CD8-positive, alpha-beta T cell (primary cell): ENCODE measurements at regions of chr12 and their contacts with region 1.

Region 1: GRCh38 chr12:54579696-54580333 is 8.6 kb downstream of the PPP1R1A start:
- DNase-seq: peak; percentile 66 to 87 (median 80)
- ATAC-seq: peak; percentile 98
- H3K4me3 ChIP-seq: no peak overlapping the region
- H3K4me3 Mint-ChIP-seq: no peak overlapping the region
- H3K27ac ChIP-seq: no peak overlapping the region
- H3K27ac Mint-ChIP-seq: no peak overlapping the region
- H3K4me1 ChIP-seq: peaks cover 6% of the 10 kb centered on the region
- H3K4me1 Mint-ChIP-seq: peaks cover 5% of the 10 kb centered on the region
- H3K27me3 ChIP-seq: no peaks in the 10 kb centered on the region
- H3K27me3 Mint-ChIP-seq: peaks cover 9% of the 10 kb centered on the region
- CTCF ChIP-seq: peak; percentile 97

Region 2: GRCh38 chr12:53862831-53863230 is 717.0 kb before region 1 on chr12:
- CTCF ChIA-PET with region 1: no interaction called
- POLR2A ChIA-PET with region 1: no interaction called
- intact Hi-C with region 1: no loop called
- DNase-seq: no peak
- ATAC-seq: no peak
- H3K4me3 ChIP-seq: no peak overlapping the region
- H3K4me3 Mint-ChIP-seq: no peak overlapping the region
- H3K27ac ChIP-seq: no peak overlapping the region
- H3K27ac Mint-ChIP-seq: no peak overlapping the region
- H3K4me1 ChIP-seq: no peaks in the 10 kb centered on the region
- H3K4me1 Mint-ChIP-seq: no peaks in the 10 kb centered on the region
- H3K27me3 ChIP-seq: peaks cover 3 to 7% of the 10 kb centered on the region in 2 experiments
- H3K27me3 Mint-ChIP-seq: peaks cover 18% of the 10 kb centered on the region
- CTCF ChIP-seq: no peak

Region 3: GRCh38 chr12:54560374-54560858 is 19.4 kb before region 1 on chr12:
- CTCF ChIA-PET with region 1: interaction called, 55 read pairs
- POLR2A ChIA-PET with region 1: no interaction called
- intact Hi-C with region 1: no loop called
- DNase-seq: peak; percentile 62 to 92 (median 83)
- ATAC-seq: peak; percentile 100
- H3K4me3 ChIP-seq: peak overlapping the region; percentile 53 to 58
- H3K4me3 Mint-ChIP-seq: peak overlapping the region; percentile 86
- H3K27ac ChIP-seq: peak overlapping the region; percentile 36 to 62
- H3K27ac Mint-ChIP-seq: peak overlapping the region; percentile 89
- H3K4me1 ChIP-seq: peaks cover 19% of the 10 kb centered on the region
- H3K4me1 Mint-ChIP-seq: peaks cover 18% of the 10 kb centered on the region
- H3K27me3 ChIP-seq: no peaks in the 10 kb centered on the region
- H3K27me3 Mint-ChIP-seq: no peaks in the 10 kb centered on the region
- CTCF ChIP-seq: no peak

Region 4: GRCh38 chr12:54641554-54641953 is 61.7 kb after region 1 on chr12:
- CTCF ChIA-PET with region 1: no interaction called
- POLR2A ChIA-PET with region 1: no interaction called
- intact Hi-C with region 1: no loop called
- DNase-seq: no peak
- ATAC-seq: no peak
- H3K4me3 ChIP-seq: no peak overlapping the region
- H3K4me3 Mint-ChIP-seq: no peak overlapping the region
- H3K27ac ChIP-seq: no peak overlapping the region
- H3K27ac Mint-ChIP-seq: no peak overlapping the region
- H3K4me1 ChIP-seq: no peaks in the 10 kb centered on the region
- H3K4me1 Mint-ChIP-seq: no peaks in the 10 kb centered on the region
- H3K27me3 ChIP-seq: no peaks in the 10 kb centered on the region
- H3K27me3 Mint-ChIP-seq: peaks cover 19% of the 10 kb centered on the region
- CTCF ChIP-seq: no peak

Region 5: GRCh38 chr12:54831631-54832030 is 251.8 kb after region 1 on chr12:
- CTCF ChIA-PET with region 1: no interaction called
- POLR2A ChIA-PET with region 1: no interaction called
- intact Hi-C with region 1: no loop called
- DNase-seq: no peak
- ATAC-seq: no peak
- H3K4me3 ChIP-seq: no peak overlapping the region
- H3K4me3 Mint-ChIP-seq: no peak overlapping the region
- H3K27ac ChIP-seq: no peak overlapping the region
- H3K27ac Mint-ChIP-seq: no peak overlapping the region
- H3K4me1 ChIP-seq: no peaks in the 10 kb centered on the region
- H3K4me1 Mint-ChIP-seq: no peaks in the 10 kb centered on the region
- H3K27me3 ChIP-seq: no peaks in the 10 kb centered on the region
- H3K27me3 Mint-ChIP-seq: peaks cover 9% of the 10 kb centered on the region
- CTCF ChIP-seq: no peak